A673 (cell line): ENCODE measurements at regions of chr16 and their contacts with region 1.

Region 1: GRCh38 chr16:30445408-30446202 is at the start of gene SEPHS2:
- DNase-seq: peak; percentile 99
- H3K4me3 ChIP-seq: peak within 1 kb of the TSS; percentile 95
- H3K27ac ChIP-seq: peak within 1 kb of the TSS; percentile 96
- H3K4me1 ChIP-seq: peaks cover 14% of the 10 kb centered on the region
- H3K27me3 ChIP-seq: no peaks in the 10 kb centered on the region
- CTCF ChIP-seq: peak; percentile 57
- total RNA-seq, gene SEPHS2: 54.2 and 55.2 TPM in 2 replicates

Region 2: GRCh38 chr16:30429678-30430427 is 15.8 kb before region 1 on chr16 and contains the start of gene DCTPP1:
- CTCF ChIA-PET with region 1: interaction called, 8 read pairs
- POLR2A ChIA-PET with region 1: interaction called, 27 read pairs
- intact Hi-C with region 1: no loop called
- DNase-seq: peak; percentile 100
- H3K4me3 ChIP-seq: peak within 1 kb of the TSS; percentile 61
- H3K27ac ChIP-seq: peak within 1 kb of the TSS; percentile 47
- H3K4me1 ChIP-seq: peaks cover 10% of the 10 kb centered on the region
- H3K27me3 ChIP-seq: no peaks in the 10 kb centered on the region
- CTCF ChIP-seq: peak; percentile 91
- total RNA-seq, gene DCTPP1: 92.5 and 111 TPM in 2 replicates

Region 3: GRCh38 chr16:30491744-30492308 is 46.2 kb after region 1 on chr16:
- CTCF ChIA-PET with region 1: no interaction called
- POLR2A ChIA-PET with region 1: no interaction called
- intact Hi-C with region 1: loop called (anchors 10 kb)
- DNase-seq: peak; percentile 86
- H3K4me3 ChIP-seq: no peak overlapping the region
- H3K27ac ChIP-seq: no peak overlapping the region
- H3K4me1 ChIP-seq: no peaks in the 10 kb centered on the region
- H3K27me3 ChIP-seq: no peaks in the 10 kb centered on the region
- CTCF ChIP-seq: no peak

Region 4: GRCh38 chr16:30602616-30603277 is 157.1 kb after region 1 on chr16:
- CTCF ChIA-PET with region 1: no interaction called
- POLR2A ChIA-PET with region 1: no interaction called
- intact Hi-C with region 1: loop called (anchors 1 kb)
- DNase-seq: peak; percentile 34
- H3K4me3 ChIP-seq: no peak overlapping the region
- H3K27ac ChIP-seq: peak overlapping the region; percentile 58
- H3K4me1 ChIP-seq: no peaks in the 10 kb centered on the region
- H3K27me3 ChIP-seq: no peaks in the 10 kb centered on the region
- CTCF ChIP-seq: no peak

Region 5: DNA sequence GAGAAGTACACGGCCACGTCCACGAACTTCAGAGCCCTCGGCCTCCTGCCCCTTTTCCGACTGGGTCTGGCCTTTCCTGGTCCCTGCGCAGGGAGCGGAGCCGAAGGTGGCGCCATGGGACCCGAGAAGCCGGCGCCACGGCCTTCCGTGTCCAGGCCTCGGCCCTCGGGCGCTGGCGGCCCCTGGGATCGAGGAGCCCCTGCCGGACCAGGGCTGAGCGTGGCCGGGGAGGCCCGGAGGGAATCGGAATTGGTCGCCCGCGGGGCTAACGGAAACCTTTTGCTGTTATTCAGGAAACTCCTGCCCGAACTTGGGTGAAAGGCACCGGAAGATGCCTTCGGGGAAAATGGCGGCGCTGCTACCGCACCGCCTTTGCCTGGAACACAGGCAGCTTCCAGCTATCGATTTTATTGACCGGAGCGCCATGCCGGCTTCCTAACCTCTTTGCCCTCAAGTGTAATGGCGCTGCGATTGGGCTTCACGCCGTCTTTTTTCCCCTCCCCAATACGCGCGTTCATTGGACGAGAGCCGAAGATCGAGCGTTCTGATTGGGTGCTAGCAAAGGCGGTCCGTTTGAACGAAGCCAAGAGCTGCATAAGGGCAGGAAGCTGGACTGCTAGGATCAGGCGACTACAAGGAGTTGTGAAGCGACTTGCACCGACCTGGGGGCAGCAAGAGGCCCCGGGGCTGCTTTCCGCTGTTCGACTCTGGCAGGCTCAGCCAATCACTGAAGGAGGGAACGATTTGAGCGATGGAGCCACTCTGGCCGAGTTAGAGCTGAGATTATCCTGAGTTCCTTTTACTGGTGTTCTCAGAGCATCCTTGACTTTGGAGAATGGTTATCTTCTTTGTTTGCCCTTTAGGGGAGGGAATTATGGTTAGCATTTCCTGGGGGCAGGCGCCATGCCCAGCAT is 164.6 kb after region 1 on chr16 and contains the start of gene ZNF689:
- CTCF ChIA-PET with region 1: interaction called, 3 read pairs
- POLR2A ChIA-PET with region 1: interaction called, 17 read pairs
- intact Hi-C with region 1: no loop called
- DNase-seq: peak; percentile 98
- H3K4me3 ChIP-seq: peak within 1 kb of the TSS; percentile 86
- H3K27ac ChIP-seq: peak within 1 kb of the TSS; percentile 97
- H3K4me1 ChIP-seq: peaks cover 4% of the 10 kb centered on the region
- H3K27me3 ChIP-seq: no peaks in the 10 kb centered on the region
- CTCF ChIP-seq: no peak
- total RNA-seq, gene ZNF689: 18.1 and 21.1 TPM in 2 replicates

Region 6: DNA sequence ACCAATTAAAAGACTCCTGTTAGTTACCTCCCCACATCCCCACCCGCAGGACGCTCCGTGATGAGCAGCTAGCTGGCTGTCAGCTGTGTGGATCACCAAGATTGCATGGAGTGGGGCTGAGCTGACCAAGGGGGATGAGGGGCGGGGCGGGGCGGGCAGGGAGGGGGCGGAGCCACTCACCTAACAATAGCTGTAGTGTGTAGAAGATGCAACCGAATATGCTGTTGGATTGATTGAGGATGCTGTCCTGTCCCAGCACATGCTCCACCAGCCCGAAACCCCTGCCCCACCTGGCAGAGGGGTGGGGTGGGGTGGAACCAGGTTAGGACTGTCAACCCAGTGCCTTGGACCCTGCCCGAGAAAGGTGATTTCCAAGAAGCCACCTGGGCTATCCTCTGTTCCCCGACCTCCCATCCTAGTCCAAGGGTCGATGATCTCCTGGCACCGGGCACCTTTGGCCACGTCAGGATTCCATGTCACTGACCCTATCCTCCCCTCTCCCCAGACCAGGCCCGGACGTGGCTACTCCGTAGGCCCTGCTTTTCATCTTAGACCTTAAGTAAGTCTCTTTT is 647.6 kb after region 1 on chr16:
- CTCF ChIA-PET with region 1: no interaction called
- POLR2A ChIA-PET with region 1: no interaction called
- intact Hi-C with region 1: no loop called
- DNase-seq: peak; percentile 49
- H3K4me3 ChIP-seq: peak overlapping the region; percentile 73
- H3K27ac ChIP-seq: no peak overlapping the region
- H3K4me1 ChIP-seq: peaks cover 3% of the 10 kb centered on the region
- H3K27me3 ChIP-seq: no peaks in the 10 kb centered on the region
- CTCF ChIP-seq: no peak